ENCODE measurements at regions of chr2 and their contacts with region 1.

Region 1: GRCh38 chr2:3303583-3304406 is 73.8 kb downstream of the EIPR1 start:
- DNase-seq: peak; percentile 73
- ATAC-seq: peak; percentile 95
- H3K4me3 ChIP-seq: peak overlapping the region in 1 of 3 experiments; percentile 12; a peak in 2 of 6 replicates
- H3K27ac ChIP-seq: peak overlapping the region; percentile 46
- H3K4me1 ChIP-seq: peaks cover 18% of the 10 kb centered on the region
- H3K27me3 ChIP-seq: no peaks in the 10 kb centered on the region
- CTCF ChIP-seq: peak; percentile 97
- EP300 ChIP-seq: peak; percentile 39 to 60; a peak in 2 of 4 replicates
- POLR2A ChIP-seq: no peak
- RAD21 ChIP-seq: peak; percentile 94

Region 2: GRCh38 chr2:2843969-2844548 is 459.7 kb before region 1 on chr2:
- CTCF ChIA-PET with region 1: no interaction called
- POLR2A ChIA-PET with region 1: no interaction called
- in situ Hi-C with region 1: no loop called
- intact Hi-C with region 1: loop called (anchors 1 kb)
- DNase-seq: peak; percentile 15
- ATAC-seq: peak; percentile 68
- H3K4me3 ChIP-seq: no peak overlapping the region
- H3K27ac ChIP-seq: no peak overlapping the region
- H3K4me1 ChIP-seq: no peaks in the 10 kb centered on the region
- H3K27me3 ChIP-seq: peaks cover 4 to 30% of the 10 kb centered on the region in 2 experiments; a peak in 2 of 5 replicates
- CTCF ChIP-seq: peak; percentile 56
- EP300 ChIP-seq: no peak
- POLR2A ChIP-seq: no peak
- RAD21 ChIP-seq: no peak

Region 3: GRCh38 chr2:3001615-3002560 is 301.9 kb before region 1 on chr2:
- CTCF ChIA-PET with region 1: no interaction called
- POLR2A ChIA-PET with region 1: no interaction called
- in situ Hi-C with region 1: no loop called
- intact Hi-C with region 1: loop called (anchors 1 kb)
- DNase-seq: no peak
- ATAC-seq: peak; percentile 91
- H3K4me3 ChIP-seq: no peak overlapping the region
- H3K27ac ChIP-seq: no peak overlapping the region
- H3K4me1 ChIP-seq: no peaks in the 10 kb centered on the region
- H3K27me3 ChIP-seq: peaks cover 2 to 30% of the 10 kb centered on the region in 2 experiments; a peak in 2 of 5 replicates
- CTCF ChIP-seq: peak; percentile 60
- EP300 ChIP-seq: no peak
- POLR2A ChIP-seq: no peak
- RAD21 ChIP-seq: no peak

Region 4: DNA sequence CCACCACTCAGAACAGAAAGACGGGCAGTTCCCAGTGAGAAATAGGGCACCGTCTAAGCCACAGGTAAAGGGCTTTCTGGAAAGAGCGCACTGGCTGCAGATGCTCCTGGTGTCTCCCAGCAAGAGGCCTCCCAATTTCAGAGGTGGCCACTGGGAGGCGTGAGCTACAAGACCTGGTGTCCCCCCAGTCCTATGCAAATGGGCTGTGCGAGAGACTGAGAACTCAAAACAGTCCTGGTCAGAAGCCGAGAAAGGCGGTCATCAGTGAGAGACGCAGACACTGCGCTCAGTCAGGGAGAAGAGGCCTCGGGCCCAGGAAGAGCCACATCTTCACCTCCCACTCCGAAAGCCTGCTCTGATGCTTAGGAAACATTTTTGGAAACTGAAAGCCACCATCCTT is 105.7 kb before region 1 on chr2:
- CTCF ChIA-PET with region 1: no interaction called
- POLR2A ChIA-PET with region 1: no interaction called
- in situ Hi-C with region 1: no loop called
- intact Hi-C with region 1: loop called (anchors 1 kb)
- DNase-seq: peak; percentile 30
- ATAC-seq: peak; percentile 80
- H3K4me3 ChIP-seq: no peak overlapping the region
- H3K27ac ChIP-seq: no peak overlapping the region
- H3K4me1 ChIP-seq: peaks cover 10% of the 10 kb centered on the region
- H3K27me3 ChIP-seq: no peaks in the 10 kb centered on the region
- CTCF ChIP-seq: peak; percentile 49
- EP300 ChIP-seq: no peak
- POLR2A ChIP-seq: no peak
- RAD21 ChIP-seq: peak; percentile 32; the same call in 1 of the 2 replicates

Region 5: GRCh38 chr2:3324404-3325281 is 20.8 kb after region 1 on chr2:
- CTCF ChIA-PET with region 1: no interaction called
- POLR2A ChIA-PET with region 1: no interaction called
- in situ Hi-C with region 1: no loop called
- intact Hi-C with region 1: no loop called
- DNase-seq: peak; percentile 75
- ATAC-seq: peak; percentile 94
- H3K4me3 ChIP-seq: peak overlapping the region in 2 of 3 experiments; percentile 14 to 49; a peak in 4 of 6 replicates
- H3K27ac ChIP-seq: peak overlapping the region; percentile 65
- H3K4me1 ChIP-seq: peaks cover 21% of the 10 kb centered on the region
- H3K27me3 ChIP-seq: no peaks in the 10 kb centered on the region
- CTCF ChIP-seq: peak; percentile 40
- EP300 ChIP-seq: peak in 1 of 2 experiments; percentile 27; a peak in 1 of 4 replicates
- POLR2A ChIP-seq: no peak; a peak in 1 of 4 replicates
- RAD21 ChIP-seq: no peak

Region 6: DNA sequence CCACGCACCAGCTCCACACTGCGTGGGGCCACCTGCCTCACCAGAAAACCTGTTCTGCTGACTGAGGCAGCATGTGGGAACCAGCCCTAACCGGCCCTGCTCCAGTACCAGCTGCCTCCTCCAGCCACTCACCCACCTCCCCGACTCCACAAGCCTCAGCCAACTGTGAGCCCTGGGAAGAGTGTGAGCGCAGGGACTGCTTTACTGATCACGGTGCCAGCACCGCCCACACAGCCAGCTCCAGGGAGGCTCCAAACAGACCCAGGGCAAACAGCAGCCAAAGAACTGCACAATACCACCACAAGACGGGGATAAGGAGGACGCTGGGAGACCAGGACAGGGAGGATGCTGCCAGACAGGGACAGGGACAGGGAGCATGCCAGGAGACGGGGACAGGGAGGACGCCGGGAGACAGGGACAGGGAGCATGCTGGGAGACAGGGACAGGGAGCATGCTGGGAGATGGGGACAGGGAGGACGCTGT is 45.5 kb after region 1 on chr2:
- CTCF ChIA-PET with region 1: no interaction called
- POLR2A ChIA-PET with region 1: no interaction called
- in situ Hi-C with region 1: no loop called
- intact Hi-C with region 1: no loop called
- DNase-seq: no peak
- ATAC-seq: peak; percentile 28
- H3K4me3 ChIP-seq: no peak overlapping the region
- H3K27ac ChIP-seq: no peak overlapping the region
- H3K4me1 ChIP-seq: no peaks in the 10 kb centered on the region
- H3K27me3 ChIP-seq: no peaks in the 10 kb centered on the region
- CTCF ChIP-seq: no peak
- EP300 ChIP-seq: no peak
- POLR2A ChIP-seq: no peak
- RAD21 ChIP-seq: no peak

Region 7: GRCh38 chr2:3692381-3692780 is 388.6 kb after region 1 on chr2:
- CTCF ChIA-PET with region 1: no interaction called
- POLR2A ChIA-PET with region 1: no interaction called
- in situ Hi-C with region 1: no loop called
- intact Hi-C with region 1: no loop called
- DNase-seq: peak; percentile 23
- ATAC-seq: peak; percentile 77
- H3K4me3 ChIP-seq: no peak overlapping the region
- H3K27ac ChIP-seq: no peak overlapping the region
- H3K4me1 ChIP-seq: no peaks in the 10 kb centered on the region
- H3K27me3 ChIP-seq: peaks cover 0 to 10% of the 10 kb centered on the region in 2 experiments; a peak in 1 of 5 replicates
- CTCF ChIP-seq: peak; percentile 57
- EP300 ChIP-seq: no peak
- POLR2A ChIP-seq: no peak
- RAD21 ChIP-seq: no peak

Measured in HepG2 (cell line).